ENCODE measurements at regions of chr1 and their contacts with region 1.

Region 1: GRCh38 chr1:70142075-70142474 is 63.3 kb downstream of the LRRC40 start:
- DNase-seq: peak; percentile 63
- H3K4me3 ChIP-seq: no peak overlapping the region
- H3K27ac ChIP-seq: no peak overlapping the region; the same call in 1 of the 2 replicates
- H3K4me1 ChIP-seq: peaks cover 39% of the 10 kb centered on the region
- H3K27me3 ChIP-seq: no peaks in the 10 kb centered on the region

Region 2: DNA sequence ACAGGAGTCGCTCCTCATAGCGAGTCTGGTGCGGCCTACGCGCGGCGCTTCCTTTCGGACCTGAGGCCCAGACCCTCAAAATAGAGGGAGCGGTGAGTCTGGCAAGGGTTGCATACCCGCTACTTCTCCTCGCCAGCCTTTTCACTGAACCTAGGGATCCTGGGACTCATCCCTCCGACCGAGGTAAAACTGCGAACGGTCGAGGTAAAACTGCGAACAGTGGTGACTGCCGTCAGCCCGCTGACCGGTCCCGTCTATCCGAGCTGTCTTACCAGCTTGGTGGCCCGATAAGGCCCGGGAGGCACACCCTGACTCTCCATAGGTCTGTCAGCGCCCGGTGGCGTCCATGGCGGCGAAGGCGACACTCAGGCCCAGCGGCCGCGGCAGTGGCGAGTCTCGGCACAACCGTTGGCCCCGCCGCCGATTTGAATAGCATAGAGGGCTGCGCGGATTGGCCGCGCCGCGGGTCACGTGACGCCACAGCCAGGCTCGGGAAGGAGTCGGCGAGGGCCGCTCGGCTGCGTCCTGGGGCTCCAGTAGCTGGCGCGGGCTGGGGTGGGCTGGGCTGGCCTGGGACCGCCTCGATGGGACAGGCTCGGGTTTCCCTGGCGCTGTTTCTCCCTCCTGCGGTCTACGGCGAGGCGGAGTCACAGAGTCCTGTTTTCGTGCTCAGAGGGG is 1645.3 kb before region 1 on chr1 and contains the start of gene DEPDC1:
- in situ Hi-C with region 1: loop called (anchors 25 kb)
- DNase-seq: peak; percentile 99
- H3K4me3 ChIP-seq: peak within 1 kb of the TSS; percentile 82
- H3K27ac ChIP-seq: peak within 1 kb of the TSS; percentile 24
- H3K4me1 ChIP-seq: peaks cover 14% of the 10 kb centered on the region; the same call in 1 of the 2 replicates
- H3K27me3 ChIP-seq: no peaks in the 10 kb centered on the region
- total RNA-seq, gene DEPDC1: 9.9 and 14.7 TPM in 2 replicates

Region 3: DNA sequence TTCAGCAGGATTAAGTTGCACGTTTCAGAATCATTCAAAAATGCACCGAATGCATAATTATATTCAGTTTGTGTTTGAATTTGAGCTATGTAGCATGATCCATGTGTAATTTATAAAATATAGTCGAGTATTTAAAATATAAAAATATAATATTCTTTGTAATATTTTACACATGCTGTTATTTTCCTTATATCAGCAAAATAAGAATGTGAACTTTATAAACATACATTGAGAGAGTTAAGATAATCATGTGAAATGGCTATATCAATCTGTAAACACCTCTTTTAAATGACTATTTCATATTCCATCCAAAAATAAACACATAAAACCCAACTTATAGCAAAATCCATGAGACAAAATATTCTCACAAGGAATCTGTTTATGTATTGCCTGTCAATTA is 270.7 kb before region 1 on chr1:
- in situ Hi-C with region 1: no loop called
- DNase-seq: no peak
- H3K4me3 ChIP-seq: no peak overlapping the region
- H3K27ac ChIP-seq: no peak overlapping the region
- H3K4me1 ChIP-seq: no peaks in the 10 kb centered on the region
- H3K27me3 ChIP-seq: no peaks in the 10 kb centered on the region

Region 4: DNA sequence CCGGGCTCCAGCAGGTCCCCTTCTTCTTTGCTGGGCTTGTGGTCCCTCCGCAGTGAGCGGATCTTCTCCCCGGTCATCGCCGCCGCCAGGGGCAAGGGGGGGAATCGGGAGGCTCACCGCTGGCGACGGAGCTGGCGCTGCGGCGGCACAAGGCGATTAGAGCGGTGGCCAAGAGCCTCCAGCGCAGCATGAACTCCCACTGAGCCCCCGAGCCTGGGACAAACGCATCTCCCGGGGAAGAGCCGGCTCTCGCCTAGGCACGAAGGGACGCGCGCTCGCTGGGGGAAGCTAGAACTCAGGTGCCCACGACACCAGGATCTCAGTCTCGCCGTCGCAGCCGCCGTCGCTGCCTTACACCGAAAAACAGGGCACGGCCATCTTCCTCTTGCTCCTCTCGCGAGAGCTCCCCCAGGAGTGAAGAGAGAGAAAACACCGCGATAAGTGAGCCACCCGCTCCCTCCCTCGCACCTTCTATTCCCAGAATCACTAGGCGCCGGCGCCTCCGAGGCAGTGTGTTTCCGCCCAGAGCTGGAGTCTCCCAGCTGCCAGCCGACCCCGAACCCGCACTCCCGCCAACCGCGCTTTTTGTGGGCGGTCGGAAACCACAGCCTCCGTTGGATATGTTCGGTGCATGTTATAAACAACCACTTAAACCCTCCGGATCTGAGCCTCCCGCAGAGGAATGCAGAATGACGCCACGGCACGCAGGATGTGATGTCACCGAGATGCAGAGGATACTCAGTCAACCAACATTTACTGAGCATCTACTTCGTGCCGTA is 212.4 kb after region 1 on chr1 and contains the start of gene ANKRD13C:
- in situ Hi-C with region 1: no loop called
- DNase-seq: peak; percentile 99
- H3K4me3 ChIP-seq: peak within 1 kb of the TSS; percentile 91
- H3K27ac ChIP-seq: peak within 1 kb of the TSS; percentile 95
- H3K4me1 ChIP-seq: peaks cover 23% of the 10 kb centered on the region
- H3K27me3 ChIP-seq: no peaks in the 10 kb centered on the region
- total RNA-seq, gene ANKRD13C: 23.9 and 33.4 TPM in 2 replicates

Measured in GM23248 (cell line).